Sigmoid colon (tissue), 7 donors: ENCODE measurements at regions of chr7 and their contacts with region 1.

Region 1: DNA sequence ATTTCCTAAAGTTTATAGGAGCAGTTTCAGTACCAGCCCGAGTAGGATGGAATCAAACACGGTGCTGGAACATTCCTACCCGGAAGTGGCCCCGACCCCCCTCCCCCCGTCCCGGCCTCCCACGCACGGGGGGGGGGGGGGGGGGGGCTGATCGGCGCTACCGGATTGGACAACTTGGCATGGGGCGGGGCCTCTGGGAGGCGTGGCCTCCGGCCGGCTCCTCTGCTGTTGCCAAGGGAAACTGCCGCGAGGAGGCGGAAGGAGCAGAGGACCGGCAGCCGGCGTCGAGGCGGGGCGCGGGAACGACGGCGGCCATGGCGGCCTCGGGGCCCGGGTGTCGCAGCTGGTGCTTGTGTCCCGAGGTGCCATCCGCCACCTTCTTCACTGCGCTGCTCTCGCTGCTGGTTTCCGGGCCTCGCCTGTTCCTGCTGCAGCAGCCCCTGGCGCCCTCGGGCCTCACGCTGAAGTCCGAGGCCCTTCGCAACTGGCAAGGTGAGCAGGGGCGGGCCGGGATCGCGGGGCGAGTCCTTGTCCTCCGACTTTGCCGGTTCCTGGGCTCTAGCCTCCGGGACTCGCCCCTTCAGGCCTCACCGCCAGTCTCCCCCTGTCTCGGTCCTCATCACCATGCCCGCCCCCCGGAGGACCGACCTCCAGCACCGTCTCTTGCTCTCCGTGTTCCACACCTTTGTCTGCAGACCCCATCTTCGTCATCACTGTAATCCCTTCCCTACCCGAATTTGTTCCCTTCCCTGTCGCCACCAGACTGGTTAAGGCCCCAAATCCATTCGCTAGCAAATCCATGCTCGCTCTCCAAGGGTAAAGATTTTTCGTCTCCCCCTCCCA is at the start of gene RHBDD2:
- DNase-seq: peak; percentile 98
- H3K4me3 ChIP-seq: peak within 1 kb of the TSS; percentile 66 to 85 (median 76)
- H3K27ac ChIP-seq: peak within 1 kb of the TSS; percentile 70 to 85 (median 83)
- H3K4me1 ChIP-seq: peaks cover 0 to 23% (median 16%) of the 10 kb centered on the region in 4 donors
- H3K27me3 ChIP-seq: no peaks in the 10 kb centered on the region
- CTCF ChIP-seq: peak in 1 of 4 experiments; percentile 25
- EP300 ChIP-seq: no peak
- POLR2A ChIP-seq: peak; percentile 92 to 94
- total RNA-seq, gene RHBDD2: 14.3 to 31.9 (median 27.0) TPM

Region 2: DNA sequence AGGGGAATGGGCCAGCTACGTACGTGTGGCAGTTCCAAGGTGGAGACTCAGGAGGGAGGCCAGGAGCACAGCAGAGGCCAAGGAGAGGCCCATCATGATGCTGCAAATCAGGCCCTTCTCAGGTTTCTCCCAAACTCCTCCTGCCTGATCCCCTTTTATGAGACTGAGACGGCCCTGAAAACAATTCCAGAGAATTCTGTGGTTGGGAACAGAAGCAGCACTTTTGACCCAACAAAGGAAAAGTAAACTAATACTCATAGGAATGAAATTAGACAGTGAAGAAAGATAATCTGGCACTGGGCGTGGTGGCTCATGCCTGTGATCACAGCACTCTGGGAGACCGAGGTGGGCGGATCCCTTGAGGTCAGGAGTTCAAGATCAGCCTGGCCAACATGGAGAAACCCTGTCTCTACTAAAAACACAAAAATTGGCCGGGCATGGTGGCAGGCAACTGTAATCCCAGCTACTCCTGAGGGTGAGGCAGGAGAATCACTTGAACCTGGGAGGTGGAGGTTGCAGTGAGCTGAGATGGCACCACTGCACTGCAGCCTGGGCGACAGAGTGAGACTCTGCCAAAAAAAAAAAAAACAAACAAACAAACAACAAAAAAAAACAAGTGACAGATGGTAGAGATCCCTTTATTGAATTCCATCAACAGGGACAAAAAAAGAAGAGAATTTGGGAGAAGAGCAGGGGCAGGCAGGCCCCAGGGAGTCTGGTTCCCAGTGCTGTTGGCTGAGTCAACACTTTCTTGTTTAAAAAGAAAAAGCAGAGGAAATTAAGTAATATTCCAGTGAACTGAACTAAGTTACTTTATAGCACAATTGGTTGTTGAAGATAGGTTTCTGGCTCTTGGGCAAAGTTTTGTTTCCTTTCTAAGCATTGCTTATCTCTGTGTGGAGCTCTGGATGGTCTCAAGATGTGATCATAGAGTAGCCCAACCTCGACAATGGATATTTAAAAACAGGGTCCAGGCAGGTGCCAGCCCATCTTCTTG is 106.6 kb before region 1 on chr7 and contains the start of gene CCL26:
- intact Hi-C with region 1: no loop called
- DNase-seq: peak; percentile 83
- H3K4me3 ChIP-seq: no peak within 1 kb of the TSS
- H3K27ac ChIP-seq: peak within 1 kb of the TSS; percentile 17 to 52 (median 22)
- H3K4me1 ChIP-seq: no peaks in the 10 kb centered on the region
- H3K27me3 ChIP-seq: no peaks in the 10 kb centered on the region
- CTCF ChIP-seq: no peak
- EP300 ChIP-seq: no peak
- POLR2A ChIP-seq: no peak
- total RNA-seq, gene CCL26: 3.3 TPM in 1 of 4 donors, not detected in the others

Region 3: GRCh38 chr7:75854233-75854632 is 24.8 kb before region 1 on chr7:
- intact Hi-C with region 1: no loop called
- DNase-seq: no peak
- H3K4me3 ChIP-seq: no peak overlapping the region
- H3K27ac ChIP-seq: no peak overlapping the region
- H3K4me1 ChIP-seq: no peaks in the 10 kb centered on the region
- H3K27me3 ChIP-seq: no peaks in the 10 kb centered on the region
- CTCF ChIP-seq: no peak
- EP300 ChIP-seq: no peak
- POLR2A ChIP-seq: no peak

Region 4: GRCh38 chr7:75914730-75915585 is 36.0 kb after region 1 on chr7 and contains the start of gene POR:
- intact Hi-C with region 1: loop called (anchors 2 kb)
- DNase-seq: peak; percentile 97
- H3K4me3 ChIP-seq: peak within 1 kb of the TSS; percentile 86 to 100 (median 88)
- H3K27ac ChIP-seq: peak within 1 kb of the TSS; percentile 89 to 95 (median 92)
- H3K4me1 ChIP-seq: peaks cover 0 to 35% (median 22%) of the 10 kb centered on the region in 4 donors
- H3K27me3 ChIP-seq: no peaks in the 10 kb centered on the region
- CTCF ChIP-seq: no peak
- EP300 ChIP-seq: no peak
- POLR2A ChIP-seq: peak; percentile 88 to 97
- total RNA-seq, gene POR: 33.2 to 47.4 (median 39.2) TPM